ENCODE measurements at regions of chrX and their contacts with region 1.

Region 1: GRCh38 chrX:11813341-11813740 is 55.3 kb downstream of the MSL3 start:
- DNase-seq: no peak

Region 2: DNA sequence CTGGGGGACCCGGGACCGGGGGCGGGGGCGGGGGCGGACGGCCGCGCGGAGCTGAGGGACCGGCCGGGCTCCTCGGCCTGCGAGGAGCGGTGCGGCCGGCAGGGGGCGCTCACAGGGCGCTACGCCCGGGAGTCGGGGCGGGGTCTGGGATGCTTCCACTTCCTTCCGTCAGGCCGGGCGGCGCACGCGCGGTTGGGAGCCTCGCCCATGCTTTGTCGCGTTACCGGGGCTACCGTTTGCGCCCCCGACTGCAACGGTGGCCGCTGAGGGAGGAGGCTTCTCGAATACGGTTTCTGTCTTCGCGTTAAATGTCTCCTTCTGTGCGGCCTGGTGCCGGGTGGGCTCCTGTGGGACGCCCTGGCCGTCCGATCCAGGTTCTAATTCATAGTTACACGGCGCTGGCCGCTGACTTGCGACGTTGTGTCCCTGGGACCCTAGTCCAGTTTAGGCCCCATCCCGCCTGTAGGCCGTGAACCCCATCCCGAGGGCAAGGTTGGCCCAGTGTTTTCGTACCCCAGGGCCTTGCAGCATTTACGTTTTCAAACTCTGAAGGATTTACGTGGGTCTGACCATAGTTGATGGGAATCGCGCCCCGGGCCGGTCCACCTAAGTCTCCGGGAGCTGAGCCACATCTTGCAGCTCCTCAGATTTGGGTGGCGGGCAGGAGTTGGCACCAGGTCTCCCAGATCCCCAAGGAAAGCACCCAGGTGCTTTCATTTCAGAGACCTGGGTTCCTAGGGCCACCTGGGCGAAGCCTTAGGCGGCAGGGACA is 54.8 kb before region 1 on chrX:
- intact Hi-C with region 1: loop called in 1 of 2 experiments (anchors 10 kb)
- DNase-seq: peak; percentile 96

Measured in posterior vena cava (tissue), 2 donors.